ENCODE measurements at regions of chr18 and their contacts with region 1.

Region 1: DNA sequence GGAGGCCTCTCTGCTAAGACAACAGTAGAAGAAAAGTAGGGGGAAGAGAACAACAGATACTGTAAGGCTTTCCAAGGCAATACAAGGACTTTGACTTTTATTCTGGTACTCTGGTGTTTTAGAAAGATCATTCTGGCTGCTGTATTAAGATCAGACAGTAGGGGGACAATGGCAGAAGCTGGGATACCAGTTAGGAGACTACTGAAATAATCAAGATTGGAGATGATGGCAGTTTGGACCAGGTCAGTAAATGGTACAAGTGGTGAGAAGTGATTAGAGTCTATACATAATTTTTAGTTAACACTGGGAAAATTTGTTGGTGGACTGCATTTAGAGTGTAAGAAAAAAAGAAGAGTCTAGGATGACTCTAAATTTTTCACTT is 139.7 kb downstream of the ROCK1 start:
- DNase-seq: peak; percentile 24
- H3K4me3 Mint-ChIP-seq: no peak overlapping the region
- H3K27ac Mint-ChIP-seq: peak overlapping the region; percentile 16
- H3K4me1 Mint-ChIP-seq: peaks cover 15% of the 10 kb centered on the region
- H3K27me3 Mint-ChIP-seq: no peaks in the 10 kb centered on the region
- CTCF ChIP-seq: no peak

Region 2: GRCh38 chr18:21074336-21075323 is 102.8 kb after region 1 on chr18:
- CTCF ChIA-PET with region 1: no interaction called
- intact Hi-C with region 1: loop called (anchors 10 kb)
- DNase-seq: peak; percentile 25
- H3K4me3 Mint-ChIP-seq: peak overlapping the region; percentile 27
- H3K27ac Mint-ChIP-seq: peak overlapping the region; percentile 53
- H3K4me1 Mint-ChIP-seq: peaks cover 58% of the 10 kb centered on the region
- H3K27me3 Mint-ChIP-seq: no peaks in the 10 kb centered on the region
- CTCF ChIP-seq: no peak

Region 3: GRCh38 chr18:21134898-21135297 is 163.0 kb after region 1 on chr18:
- CTCF ChIA-PET with region 1: no interaction called
- intact Hi-C with region 1: loop called (anchors 5 kb)
- DNase-seq: peak; percentile 18
- H3K4me3 Mint-ChIP-seq: no peak overlapping the region
- H3K27ac Mint-ChIP-seq: no peak overlapping the region
- H3K4me1 Mint-ChIP-seq: no peaks in the 10 kb centered on the region
- H3K27me3 Mint-ChIP-seq: no peaks in the 10 kb centered on the region
- CTCF ChIP-seq: no peak

Region 4: GRCh38 chr18:21191596-21192307 is 219.9 kb after region 1 on chr18:
- CTCF ChIA-PET with region 1: interaction called, 3 read pairs
- intact Hi-C with region 1: loop called (anchors 5 kb)
- DNase-seq: peak; percentile 68
- H3K4me3 Mint-ChIP-seq: no peak overlapping the region
- H3K27ac Mint-ChIP-seq: no peak overlapping the region
- H3K4me1 Mint-ChIP-seq: peaks cover 11% of the 10 kb centered on the region
- H3K27me3 Mint-ChIP-seq: no peaks in the 10 kb centered on the region
- CTCF ChIP-seq: peak; percentile 81

Region 5: GRCh38 chr18:21391074-21391673 is 419.3 kb after region 1 on chr18:
- CTCF ChIA-PET with region 1: no interaction called
- intact Hi-C with region 1: no loop called
- DNase-seq: peak; percentile 28
- H3K4me3 Mint-ChIP-seq: no peak overlapping the region
- H3K27ac Mint-ChIP-seq: peak overlapping the region; percentile 64
- H3K4me1 Mint-ChIP-seq: peaks cover 20% of the 10 kb centered on the region
- H3K27me3 Mint-ChIP-seq: no peaks in the 10 kb centered on the region
- CTCF ChIP-seq: no peak

Region 6: GRCh38 chr18:21444465-21445023 is 472.7 kb after region 1 on chr18:
- CTCF ChIA-PET with region 1: no interaction called
- intact Hi-C with region 1: no loop called
- DNase-seq: peak; percentile 57
- H3K4me3 Mint-ChIP-seq: no peak overlapping the region
- H3K27ac Mint-ChIP-seq: no peak overlapping the region
- H3K4me1 Mint-ChIP-seq: peaks cover 26% of the 10 kb centered on the region
- H3K27me3 Mint-ChIP-seq: no peaks in the 10 kb centered on the region
- CTCF ChIP-seq: peak; percentile 73

Measured in Calu3 (cell line).